HAP-1 (cell line): ENCODE measurements at regions of chrX and their contacts with region 1.

Region 1: DNA sequence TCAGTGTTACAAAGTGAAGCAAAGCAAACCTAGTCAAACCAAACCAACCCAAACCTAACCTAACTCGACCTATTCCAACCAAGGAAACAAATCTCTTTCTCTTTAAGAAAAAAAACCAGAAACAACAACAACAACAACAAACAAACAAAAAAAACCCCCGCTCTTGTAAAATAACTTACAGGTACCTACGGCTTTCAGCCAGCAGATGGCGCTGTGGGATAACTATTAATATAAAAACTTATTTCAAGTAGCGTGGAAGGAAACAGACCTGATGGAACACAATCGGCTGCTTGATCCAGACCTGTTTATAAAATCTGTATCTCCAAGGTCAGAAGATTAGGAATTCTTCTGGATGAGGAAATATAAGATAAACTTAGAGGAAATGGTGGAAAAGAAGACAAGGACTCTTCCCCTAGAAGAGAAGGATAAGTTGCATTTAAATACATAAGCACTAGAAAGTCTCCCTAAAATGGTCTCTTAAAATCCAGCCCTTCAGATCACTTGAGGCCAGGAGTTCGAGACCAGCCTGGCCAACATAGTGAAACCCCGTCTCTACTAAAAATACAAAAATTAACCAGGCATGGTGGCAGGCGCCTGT is 34.4 kb upstream of the CDKL5 start:
- DNase-seq: peak; percentile 69 to 81
- H3K4me3 ChIP-seq: no peak overlapping the region
- H3K4me1 ChIP-seq: no peaks in the 10 kb centered on the region
- H3K27me3 ChIP-seq: no peaks in the 10 kb centered on the region

Region 2: GRCh38 chrX:18291006-18291545 is 100.0 kb before region 1 on chrX:
- in situ Hi-C with region 1: no loop called
- DNase-seq: no peak
- H3K4me3 ChIP-seq: no peak overlapping the region
- H3K4me1 ChIP-seq: peaks cover 50% of the 10 kb centered on the region
- H3K27me3 ChIP-seq: no peaks in the 10 kb centered on the region

Region 3: GRCh38 chrX:18899796-18900447 is 508.9 kb after region 1 on chrX:
- in situ Hi-C with region 1: loop called (anchors 5 kb)
- DNase-seq: peak in 1 of 2 experiments; percentile 44
- H3K4me3 ChIP-seq: no peak overlapping the region
- H3K4me1 ChIP-seq: no peaks in the 10 kb centered on the region
- H3K27me3 ChIP-seq: no peaks in the 10 kb centered on the region

Region 4: GRCh38 chrX:19017271-19017670 is 626.2 kb after region 1 on chrX:
- in situ Hi-C with region 1: loop called (anchors 25 kb)
- DNase-seq: peak; percentile 40 to 58
- H3K4me3 ChIP-seq: no peak overlapping the region
- H3K4me1 ChIP-seq: no peaks in the 10 kb centered on the region
- H3K27me3 ChIP-seq: no peaks in the 10 kb centered on the region; the same call in 1 of the 2 replicates

Region 5: DNA sequence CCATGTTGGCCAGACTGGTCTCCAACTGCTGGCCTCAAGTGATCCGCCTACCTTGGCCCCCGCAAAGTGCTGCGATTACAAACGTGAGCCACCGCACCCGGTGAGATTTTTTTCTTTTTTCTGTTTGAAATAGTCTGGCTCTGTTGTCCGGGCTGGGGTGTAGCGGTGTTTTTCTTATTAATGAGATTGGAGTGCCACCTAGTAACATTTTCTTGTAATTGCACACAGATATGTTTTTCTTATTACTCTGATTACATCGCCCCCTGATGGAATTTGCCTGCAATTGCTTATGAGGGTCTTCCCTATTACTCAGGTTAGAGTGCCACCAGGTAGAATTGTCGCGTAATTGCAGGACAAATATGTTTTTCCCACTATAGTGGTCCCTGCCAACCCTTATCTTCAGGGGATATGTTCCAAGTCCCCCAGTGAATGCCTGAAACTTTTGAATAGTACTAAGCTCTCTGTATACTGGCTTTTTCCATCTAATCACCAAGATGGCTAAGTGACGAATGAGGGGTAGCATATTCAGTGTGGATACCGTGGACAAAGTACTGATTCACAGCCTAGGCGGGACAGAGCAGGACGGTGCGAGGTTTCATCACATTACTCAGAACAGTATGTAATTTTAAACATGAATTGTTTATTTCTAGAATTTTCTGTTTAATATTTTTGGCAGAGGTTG is 944.0 kb after region 1 on chrX:
- in situ Hi-C with region 1: loop called (anchors 5 kb)
- DNase-seq: peak; percentile 38 to 43
- H3K4me3 ChIP-seq: no peak overlapping the region
- H3K4me1 ChIP-seq: no peaks in the 10 kb centered on the region
- H3K27me3 ChIP-seq: peaks cover 7% of the 10 kb centered on the region